Left cardiac atrium (tissue), 4 donors: ENCODE measurements at regions of chr15 and their contacts with region 1.

Region 1: GRCh38 chr15:73637527-73637926 is 4.3 kb upstream of the NPTN start:
- DNase-seq: no peak
- ATAC-seq: no peak

Region 2: GRCh38 chr15:73305331-73306211 is 332.0 kb before region 1 on chr15:
- intact Hi-C with region 1: loop called in 1 of 2 experiments (anchors 2 kb)
- DNase-seq: peak; percentile 42
- ATAC-seq: peak; percentile 81 to 85

Region 3: DNA sequence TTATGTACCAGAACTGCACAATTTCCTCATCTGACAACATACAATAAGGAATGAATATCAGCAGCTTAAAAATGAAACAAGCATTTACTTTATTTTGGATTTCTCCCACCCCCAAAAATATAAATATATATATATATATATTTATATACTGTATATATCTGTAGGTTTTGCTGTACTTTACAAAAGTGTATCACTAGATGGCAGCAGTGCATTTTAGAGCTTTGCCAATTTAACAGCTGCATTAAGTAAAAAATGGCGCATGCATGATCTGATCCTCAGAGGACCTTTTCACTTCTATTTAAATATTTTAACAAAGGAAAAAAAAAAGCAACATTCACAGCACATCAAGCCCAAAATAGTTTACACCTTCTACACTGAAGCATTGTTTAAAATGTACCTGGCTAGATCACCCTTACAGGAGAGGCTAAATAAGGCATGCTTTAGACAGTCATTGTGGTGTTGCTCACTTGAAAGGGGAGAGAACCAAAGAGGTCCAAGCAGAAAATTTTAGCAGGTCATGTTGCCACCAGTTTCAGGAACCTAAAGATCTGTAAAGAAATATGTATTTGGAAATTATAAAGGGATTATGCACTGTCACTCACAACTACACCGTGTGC is 76.9 kb before region 1 on chr15:
- intact Hi-C with region 1: loop called (anchors 2 to 5 kb)
- DNase-seq: no peak
- ATAC-seq: no peak